Astrocyte of the cerebellum (primary cell): ENCODE measurements at regions of chr2 and their contacts with region 1.

Region 1: DNA sequence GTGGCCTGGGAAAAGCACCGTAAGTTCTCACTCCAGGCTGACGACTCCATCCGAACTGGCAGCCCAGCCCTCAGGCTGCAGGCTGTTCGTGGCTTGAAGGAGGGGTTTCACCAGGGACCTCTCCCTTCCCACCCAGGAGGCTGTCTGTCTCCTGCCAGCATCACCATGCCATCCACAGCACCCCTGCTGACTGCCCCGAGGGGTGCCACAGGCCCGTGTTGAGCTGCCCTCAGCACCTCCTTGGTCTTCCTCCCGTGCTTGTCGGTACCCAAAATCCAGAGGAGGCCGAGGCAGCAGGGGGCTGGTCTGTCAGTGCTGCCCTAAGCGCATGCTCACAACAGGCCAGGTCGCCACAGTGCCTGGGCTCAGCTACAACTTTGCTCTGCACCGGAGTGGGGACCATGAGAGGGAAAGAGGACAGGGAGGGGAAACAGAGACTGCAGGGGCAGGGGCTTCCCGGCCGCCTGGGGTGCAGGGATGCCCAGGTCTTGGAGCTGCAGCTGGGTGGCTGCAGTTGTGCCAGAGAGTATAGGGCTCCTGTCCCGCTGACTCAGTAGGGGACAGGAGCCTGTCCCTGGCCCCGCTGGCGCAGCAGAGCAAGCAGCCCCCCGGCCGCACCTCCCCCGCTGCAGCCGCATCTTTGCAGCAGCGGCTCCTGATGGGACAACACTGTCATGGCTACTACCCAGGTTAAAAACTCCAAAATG is 963.7 kb upstream of the CRIM1 start:
- DNase-seq: no peak
- H3K4me3 ChIP-seq: no peak overlapping the region
- CTCF ChIP-seq: no peak

Region 2: DNA sequence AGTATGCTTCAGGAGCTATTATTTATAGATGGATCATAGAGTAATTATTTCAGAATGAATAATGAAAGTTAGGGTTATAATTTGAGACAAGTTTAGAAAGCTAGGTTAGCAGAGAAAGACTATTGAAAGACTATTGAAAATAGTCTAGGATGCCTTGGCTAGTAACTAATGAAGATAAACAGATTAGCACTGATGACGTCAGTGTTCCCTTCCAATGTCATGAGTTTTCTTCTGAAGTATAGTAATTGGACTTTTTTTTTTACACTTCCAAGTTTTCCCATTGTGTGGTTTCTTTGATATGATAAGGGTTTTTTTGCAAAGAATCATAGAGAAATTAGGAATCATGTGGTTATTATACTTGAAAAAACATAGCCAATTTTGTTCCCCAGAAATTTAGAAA is 77.8 kb before region 1 on chr2:
- in situ Hi-C with region 1: no loop called
- DNase-seq: no peak
- H3K4me3 ChIP-seq: no peak overlapping the region
- CTCF ChIP-seq: no peak

Region 3: DNA sequence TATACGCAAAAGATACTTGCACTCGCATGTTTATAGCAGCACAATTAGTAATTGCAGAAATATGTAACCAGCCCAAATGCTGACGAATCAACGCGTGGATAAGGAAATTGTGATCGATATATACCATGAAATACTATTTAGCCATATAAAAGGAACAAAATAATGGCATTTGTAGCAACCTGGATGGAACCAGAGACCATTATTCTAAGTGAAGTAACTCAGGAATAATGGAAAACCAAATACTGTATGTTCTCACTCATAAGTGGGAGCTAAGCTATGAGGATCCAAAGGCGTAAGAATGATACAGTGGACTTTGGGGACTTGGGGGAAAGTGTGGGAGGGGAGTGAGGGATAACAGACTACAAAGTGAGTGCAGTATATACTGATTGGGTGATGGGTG is 44.3 kb before region 1 on chr2:
- in situ Hi-C with region 1: loop called (anchors 5 kb)
- DNase-seq: no peak
- H3K4me3 ChIP-seq: no peak overlapping the region
- CTCF ChIP-seq: no peak